Activated naive CD4-positive, alpha-beta T cell treated with anti-CD3 and anti-CD28 coated beads for 36 hours (primary cell): ENCODE measurements at regions of chr3 and their contacts with region 1.

Region 1: DNA sequence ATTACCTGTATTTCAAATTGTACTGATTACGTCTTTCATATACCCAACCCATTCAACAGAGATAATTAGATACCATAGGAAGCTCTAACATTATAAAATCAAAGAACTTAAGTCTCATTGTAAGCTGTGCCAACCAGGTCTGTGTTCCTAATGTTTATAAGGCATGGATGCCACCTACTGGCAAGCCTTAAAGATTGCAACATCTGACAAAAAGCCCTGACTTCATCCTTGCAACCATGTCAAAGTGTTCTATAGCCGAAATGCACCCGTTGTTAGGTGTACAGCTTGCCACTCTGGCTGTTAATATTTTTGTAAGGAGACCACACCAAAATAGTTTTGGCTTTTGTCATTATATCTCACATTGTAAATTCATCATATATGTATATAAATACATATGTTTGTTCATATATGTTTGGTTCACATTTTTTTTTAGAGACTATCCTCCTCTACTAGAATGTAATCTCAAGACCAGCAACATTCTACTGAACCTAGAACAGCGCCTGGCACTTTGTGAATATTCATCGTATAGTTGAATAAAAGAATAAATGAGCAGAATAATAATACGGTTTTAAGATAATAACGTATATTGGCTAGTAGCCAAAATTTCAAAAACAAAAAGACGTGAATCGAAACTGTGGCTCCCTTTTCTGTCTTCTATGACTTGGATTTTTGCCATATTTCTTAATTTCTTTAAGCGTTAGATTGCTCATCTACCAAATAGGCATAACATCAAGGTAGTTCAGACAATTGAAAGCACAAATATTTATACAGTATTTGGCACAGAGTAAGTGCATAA is 258.1 kb downstream of the TBL1XR1 start:
- DNase-seq: peak; percentile 56
- H3K4me3 Mint-ChIP-seq: no peak overlapping the region
- H3K27ac Mint-ChIP-seq: no peak overlapping the region
- H3K4me1 Mint-ChIP-seq: no peaks in the 10 kb centered on the region
- H3K27me3 Mint-ChIP-seq: peaks cover 3% of the 10 kb centered on the region

Region 2: GRCh38 chr3:176430244-176431037 is 508.8 kb before region 1 on chr3:
- CTCF ChIA-PET with region 1: no interaction called
- intact Hi-C with region 1: loop called (anchors 10 kb)
- DNase-seq: peak; percentile 5
- H3K4me3 Mint-ChIP-seq: no peak overlapping the region
- H3K27ac Mint-ChIP-seq: no peak overlapping the region
- H3K4me1 Mint-ChIP-seq: no peaks in the 10 kb centered on the region
- H3K27me3 Mint-ChIP-seq: no peaks in the 10 kb centered on the region

Region 3: GRCh38 chr3:176514297-176514696 is 424.9 kb before region 1 on chr3:
- CTCF ChIA-PET with region 1: interaction called, 3 read pairs
- intact Hi-C with region 1: loop called (anchors 1 kb)
- DNase-seq: peak; percentile 15
- H3K4me3 Mint-ChIP-seq: no peak overlapping the region
- H3K27ac Mint-ChIP-seq: no peak overlapping the region
- H3K4me1 Mint-ChIP-seq: no peaks in the 10 kb centered on the region
- H3K27me3 Mint-ChIP-seq: no peaks in the 10 kb centered on the region

Region 4: DNA sequence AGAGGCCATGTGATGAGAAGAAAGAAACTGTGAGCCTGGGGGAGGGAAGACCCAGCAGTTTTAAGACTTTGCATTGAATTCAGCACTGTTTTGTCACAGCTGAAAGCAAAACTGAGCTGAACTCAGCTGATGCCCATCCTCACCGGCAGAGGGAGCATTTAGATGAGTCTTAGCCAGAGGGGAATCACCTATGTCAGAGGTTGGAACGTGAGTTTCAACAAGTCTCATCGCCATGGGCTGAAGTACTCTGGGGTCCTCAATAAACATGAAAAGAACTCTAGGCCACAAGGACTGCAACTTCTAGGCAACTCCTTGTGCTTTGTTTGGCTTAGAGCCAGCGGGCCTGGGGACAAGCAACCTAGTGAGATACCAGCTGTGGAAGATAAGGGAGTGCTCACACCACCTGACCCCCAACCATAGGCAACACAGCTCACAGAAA is 66.4 kb before region 1 on chr3:
- CTCF ChIA-PET with region 1: interaction called, 31 read pairs
- intact Hi-C with region 1: loop called (anchors 1 kb)
- DNase-seq: peak; percentile 77
- H3K4me3 Mint-ChIP-seq: no peak overlapping the region
- H3K27ac Mint-ChIP-seq: no peak overlapping the region
- H3K4me1 Mint-ChIP-seq: peaks cover 3% of the 10 kb centered on the region
- H3K27me3 Mint-ChIP-seq: no peaks in the 10 kb centered on the region

Region 5: GRCh38 chr3:178385280-178385952 is 1446.2 kb after region 1 on chr3:
- CTCF ChIA-PET with region 1: no interaction called
- intact Hi-C with region 1: loop called (anchors 10 kb)
- DNase-seq: peak; percentile 15
- H3K4me3 Mint-ChIP-seq: no peak overlapping the region
- H3K27ac Mint-ChIP-seq: no peak overlapping the region
- H3K4me1 Mint-ChIP-seq: no peaks in the 10 kb centered on the region
- H3K27me3 Mint-ChIP-seq: peaks cover 5% of the 10 kb centered on the region